ENCODE measurements at regions of chr1 and their contacts with region 1.

Region 1: GRCh38 chr1:205061665-205062069 is 18.7 kb downstream of the CNTN2 start:
- DNase-seq: peak; percentile 87

Region 2: DNA sequence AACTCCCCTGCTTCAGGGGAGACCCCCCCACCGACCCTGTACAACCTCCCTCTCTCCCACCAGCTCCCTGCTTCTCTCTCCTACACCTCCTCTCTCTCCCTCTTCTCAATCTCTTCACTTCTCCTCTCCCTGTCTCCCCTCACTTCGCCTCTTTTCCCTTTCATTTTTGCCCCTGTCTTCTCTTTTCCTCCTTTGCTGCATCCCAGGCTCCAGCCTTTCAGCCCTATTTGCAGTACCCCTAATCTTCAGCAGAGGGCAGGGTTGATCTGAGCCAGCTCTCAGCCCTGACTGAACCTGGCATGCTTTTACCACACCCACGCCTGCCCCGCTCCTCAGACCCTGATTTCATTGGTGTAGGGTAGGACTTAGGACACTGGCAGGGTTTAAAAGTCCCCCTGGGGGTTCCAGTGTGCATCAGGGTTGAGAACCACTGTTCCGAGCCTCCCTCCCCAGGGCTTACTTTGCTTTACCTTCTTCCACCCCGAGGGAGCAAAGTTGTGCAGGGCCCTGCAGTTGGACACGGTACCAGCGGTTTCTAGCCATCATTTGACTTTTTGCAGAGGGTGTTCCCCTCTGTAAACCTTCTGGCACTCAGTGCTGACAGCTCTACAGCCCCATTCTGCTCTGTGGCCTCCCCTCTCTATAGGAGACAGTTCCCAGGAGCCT is 86.0 kb before region 1 on chr1:
- CTCF ChIA-PET with region 1: interaction called, 20 read pairs
- POLR2A ChIA-PET with region 1: no interaction called
- DNase-seq: peak; percentile 86

Region 3: DNA sequence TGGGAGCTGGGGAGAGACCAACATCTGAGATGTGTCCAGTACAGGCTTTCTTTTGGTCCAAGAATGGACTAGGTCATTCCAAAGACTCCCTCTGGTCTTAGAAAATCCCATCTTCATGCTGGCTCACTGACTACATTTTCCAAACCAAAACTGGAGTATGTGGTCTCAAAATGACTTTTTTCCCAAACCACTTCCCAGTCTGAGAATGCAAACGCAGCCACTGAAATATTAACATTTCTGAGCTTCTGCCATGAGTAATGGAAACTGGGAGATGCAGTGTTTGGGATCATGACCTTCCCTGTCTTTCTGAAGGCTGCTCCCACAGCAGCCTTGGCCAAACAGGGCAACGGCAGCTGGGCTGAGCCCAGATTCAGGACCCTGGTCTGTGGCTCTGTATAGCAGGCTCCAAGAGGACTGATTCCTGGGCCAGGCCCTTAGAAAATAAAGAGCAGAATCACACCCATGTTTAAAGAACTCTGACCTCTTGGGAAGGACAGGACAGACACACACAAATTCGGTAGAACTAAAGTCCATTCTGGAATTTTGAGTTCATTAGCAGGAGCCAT is 80.7 kb before region 1 on chr1:
- CTCF ChIA-PET with region 1: interaction called, 20 read pairs
- POLR2A ChIA-PET with region 1: no interaction called
- DNase-seq: no peak

Region 4: DNA sequence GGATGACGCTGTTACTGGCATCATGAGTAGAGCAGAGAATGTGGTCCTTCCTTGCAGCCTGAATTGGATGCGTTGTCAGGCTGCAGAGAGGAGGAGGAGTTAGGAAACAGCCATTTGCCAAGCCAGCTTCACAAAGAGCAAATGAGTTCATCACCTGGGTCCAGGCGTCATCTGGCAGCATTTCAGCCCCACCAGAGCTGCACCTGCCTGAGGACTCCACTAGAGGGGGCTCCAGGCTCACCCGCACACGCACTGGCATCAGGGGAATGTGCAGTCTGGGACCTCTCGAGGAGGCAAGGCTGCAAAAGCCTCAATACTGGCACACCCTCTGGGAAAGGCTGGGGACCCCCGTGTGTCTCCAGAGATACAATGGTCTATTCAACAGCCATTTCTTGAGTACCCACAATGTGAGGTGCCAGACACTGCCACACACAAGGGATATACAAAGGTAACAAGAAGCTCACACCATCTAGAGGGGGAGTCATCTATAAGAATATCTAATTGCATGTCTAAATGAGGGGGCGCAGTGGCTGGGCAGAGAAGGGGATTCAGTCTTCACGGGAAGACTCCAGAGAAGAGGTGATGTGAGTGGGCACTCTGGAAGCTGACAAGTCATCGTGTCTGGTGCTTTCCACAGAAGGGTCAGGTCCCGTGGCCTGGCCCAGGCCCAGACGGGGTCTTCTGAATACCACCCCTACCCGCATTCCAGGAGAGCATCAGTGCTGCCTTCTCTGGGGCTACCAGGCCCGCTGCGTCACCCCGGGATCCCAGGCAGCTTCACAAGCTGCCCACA is 72.2 kb before region 1 on chr1:
- CTCF ChIA-PET with region 1: interaction called, 92 read pairs
- POLR2A ChIA-PET with region 1: interaction called, 12 read pairs
- DNase-seq: peak; percentile 95

Region 5: DNA sequence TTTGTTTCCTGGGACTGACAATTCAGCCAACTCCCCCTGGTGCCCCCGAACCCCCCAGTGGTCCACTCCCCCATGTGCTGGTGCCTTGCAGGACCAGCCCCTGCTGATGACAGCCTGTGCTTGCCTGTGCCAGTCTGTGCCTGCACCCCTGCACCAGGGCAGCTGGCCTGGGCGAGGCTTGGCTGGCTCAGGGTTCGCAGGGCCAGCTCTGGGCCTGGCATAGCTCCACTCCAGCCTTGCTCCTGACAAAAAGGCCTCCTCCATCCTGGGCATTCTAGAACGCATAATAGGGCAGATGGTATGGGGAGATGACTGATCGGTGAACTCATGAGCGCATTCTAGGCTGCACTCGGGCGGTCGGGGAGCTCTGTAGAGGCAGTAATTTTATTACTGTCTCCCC is 13.3 kb before region 1 on chr1:
- CTCF ChIA-PET with region 1: interaction called, 44 read pairs
- POLR2A ChIA-PET with region 1: no interaction called
- DNase-seq: no peak

Region 6: GRCh38 chr1:205077158-205077933 is 15.7 kb after region 1 on chr1:
- CTCF ChIA-PET with region 1: interaction called, 24 read pairs
- POLR2A ChIA-PET with region 1: no interaction called
- DNase-seq: no peak

Region 7: DNA sequence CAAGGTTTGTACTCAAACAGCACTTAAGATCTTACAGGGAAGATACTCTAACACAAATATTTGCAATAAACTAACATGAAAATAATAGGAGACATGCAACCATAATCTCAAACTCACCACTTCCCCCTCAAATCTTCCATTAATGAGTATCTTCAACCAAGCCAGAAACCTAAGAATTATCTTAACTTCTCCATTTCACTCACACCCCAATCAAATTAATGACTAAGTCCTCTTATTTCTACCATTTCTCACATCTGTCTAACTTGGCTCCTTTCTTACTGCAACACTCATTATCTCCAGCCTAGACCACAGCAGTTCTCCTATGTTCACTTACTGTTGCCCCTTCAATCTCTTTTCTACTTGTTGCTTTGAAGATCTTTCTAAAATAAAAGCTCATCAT is 49.7 kb after region 1 on chr1:
- CTCF ChIA-PET with region 1: no interaction called
- POLR2A ChIA-PET with region 1: no interaction called
- DNase-seq: no peak

Measured in HEK293T (cell line).